Activated CD4-positive, alpha-beta memory T cell treated with anti-CD3 and anti-CD28 coated beads for 36 hours (primary cell): ENCODE measurements at regions of chr9 and their contacts with region 1.

Region 1: DNA sequence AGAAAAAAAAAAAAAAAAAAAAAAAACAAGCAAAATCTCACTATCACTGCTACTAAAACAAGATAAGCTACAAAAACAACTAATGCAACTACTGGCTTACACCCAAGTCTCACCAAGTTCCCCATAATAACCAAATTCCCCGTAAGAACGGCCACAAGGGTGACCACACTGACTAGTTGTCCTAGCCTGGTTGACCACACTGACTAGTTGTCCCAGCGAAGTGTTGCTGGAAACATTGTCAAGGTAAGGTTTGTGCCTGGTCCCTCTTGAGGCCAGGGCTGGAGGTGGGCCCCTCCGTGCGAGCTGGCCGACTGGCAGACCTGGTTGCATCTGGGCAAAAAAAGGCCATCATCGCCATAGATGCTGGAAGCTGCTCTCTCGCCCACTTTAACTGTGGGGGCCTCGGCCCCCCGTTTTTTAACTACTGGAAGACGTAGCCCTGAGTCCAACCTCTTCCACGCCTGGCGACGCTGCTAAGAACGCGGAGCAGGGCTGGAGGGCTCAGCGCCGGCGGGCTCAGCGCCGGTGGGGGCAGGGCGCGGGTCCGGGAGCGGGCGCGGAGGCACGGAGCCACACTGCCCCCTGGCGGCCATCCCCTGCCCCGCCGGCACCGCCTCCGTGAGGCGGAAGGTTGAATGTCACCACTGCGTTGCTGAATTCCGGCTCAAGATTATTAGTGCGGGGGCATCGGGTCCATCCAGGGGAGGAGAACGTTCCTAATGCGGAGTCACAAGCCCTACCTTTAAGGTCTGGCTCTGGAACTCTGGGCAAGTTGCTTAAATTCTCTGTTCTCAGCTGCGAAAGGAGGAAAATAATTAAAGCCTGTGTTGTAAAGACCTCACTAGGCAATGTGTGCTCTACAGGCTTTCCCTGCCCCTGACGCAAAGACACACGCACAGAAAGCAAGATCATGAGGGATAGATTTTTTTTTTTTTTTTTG is 84.0 kb downstream of the HSD17B3 start:
- DNase-seq: peak; percentile 77
- H3K4me3 Mint-ChIP-seq: peak overlapping the region; percentile 48
- H3K27ac Mint-ChIP-seq: no peak overlapping the region
- H3K4me1 Mint-ChIP-seq: peaks cover 16% of the 10 kb centered on the region
- H3K27me3 Mint-ChIP-seq: peaks cover 52% of the 10 kb centered on the region

Region 2: GRCh38 chr9:96020792-96021550 is 197.1 kb before region 1 on chr9:
- CTCF ChIA-PET with region 1: no interaction called
- POLR2A ChIA-PET with region 1: no interaction called
- intact Hi-C with region 1: loop called (anchors 10 kb)
- DNase-seq: peak; percentile 65
- H3K4me3 Mint-ChIP-seq: peak overlapping the region; percentile 73
- H3K27ac Mint-ChIP-seq: peak overlapping the region; percentile 61
- H3K4me1 Mint-ChIP-seq: peaks cover 52% of the 10 kb centered on the region
- H3K27me3 Mint-ChIP-seq: peaks cover 12% of the 10 kb centered on the region

Region 3: GRCh38 chr9:96317335-96317980 is 99.4 kb after region 1 on chr9:
- CTCF ChIA-PET with region 1: interaction called, 4 read pairs
- POLR2A ChIA-PET with region 1: no interaction called
- intact Hi-C with region 1: loop called (anchors 5 kb)
- DNase-seq: peak; percentile 55
- H3K4me3 Mint-ChIP-seq: no peak overlapping the region
- H3K27ac Mint-ChIP-seq: no peak overlapping the region
- H3K4me1 Mint-ChIP-seq: no peaks in the 10 kb centered on the region
- H3K27me3 Mint-ChIP-seq: no peaks in the 10 kb centered on the region

Region 4: DNA sequence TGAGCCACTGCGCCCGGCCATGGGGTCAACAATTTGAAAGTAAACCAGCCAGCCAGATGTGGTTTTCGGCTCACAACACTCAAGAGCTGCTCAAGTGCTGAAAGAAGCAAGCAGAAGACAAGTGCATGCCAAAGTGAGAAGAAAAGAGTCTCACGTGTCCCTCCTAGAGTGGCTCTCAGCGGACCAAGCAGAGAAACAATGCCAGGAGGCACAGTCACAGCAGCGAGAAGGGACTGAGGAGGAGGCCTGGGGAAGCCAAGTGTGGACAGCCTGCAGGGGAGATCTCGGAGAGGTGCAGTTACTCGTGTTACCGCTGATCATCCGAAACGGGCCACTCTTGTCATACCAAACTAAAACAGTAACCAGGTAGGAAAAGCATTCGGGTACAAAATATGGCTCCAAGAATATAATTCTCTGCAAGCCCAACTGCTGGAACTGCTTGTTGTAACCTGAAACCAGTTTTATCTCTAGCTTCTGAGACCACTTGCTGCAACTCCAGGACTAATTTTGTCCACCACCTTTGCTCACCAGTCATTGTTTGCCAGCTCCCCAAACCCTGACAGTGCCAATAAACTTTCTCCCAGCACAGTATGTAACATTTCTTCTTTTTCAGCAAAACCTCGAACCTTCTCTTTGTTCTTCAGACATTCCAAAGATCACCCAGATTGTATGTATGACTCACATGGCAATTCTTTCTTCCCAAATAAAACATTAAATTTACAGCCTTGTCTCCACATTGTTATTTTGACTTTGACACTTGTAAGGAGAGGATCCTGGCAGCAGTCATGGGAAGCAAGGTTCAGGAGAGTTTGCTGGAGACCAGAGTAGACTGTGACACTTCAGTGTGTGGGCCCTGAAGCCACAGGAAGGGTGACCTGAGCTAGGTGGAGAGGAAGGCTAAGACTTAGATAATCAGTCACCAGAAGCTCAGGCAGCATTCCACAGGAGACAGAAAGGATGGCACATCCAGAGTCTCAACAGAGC is 159.2 kb after region 1 on chr9:
- CTCF ChIA-PET with region 1: no interaction called
- POLR2A ChIA-PET with region 1: no interaction called
- intact Hi-C with region 1: no loop called
- DNase-seq: no peak
- H3K4me3 Mint-ChIP-seq: no peak overlapping the region
- H3K27ac Mint-ChIP-seq: no peak overlapping the region
- H3K4me1 Mint-ChIP-seq: peaks cover 14% of the 10 kb centered on the region
- H3K27me3 Mint-ChIP-seq: no peaks in the 10 kb centered on the region